RWPE1 (cell line): ENCODE measurements at regions of chr1 and their contacts with region 1.

Region 1: DNA sequence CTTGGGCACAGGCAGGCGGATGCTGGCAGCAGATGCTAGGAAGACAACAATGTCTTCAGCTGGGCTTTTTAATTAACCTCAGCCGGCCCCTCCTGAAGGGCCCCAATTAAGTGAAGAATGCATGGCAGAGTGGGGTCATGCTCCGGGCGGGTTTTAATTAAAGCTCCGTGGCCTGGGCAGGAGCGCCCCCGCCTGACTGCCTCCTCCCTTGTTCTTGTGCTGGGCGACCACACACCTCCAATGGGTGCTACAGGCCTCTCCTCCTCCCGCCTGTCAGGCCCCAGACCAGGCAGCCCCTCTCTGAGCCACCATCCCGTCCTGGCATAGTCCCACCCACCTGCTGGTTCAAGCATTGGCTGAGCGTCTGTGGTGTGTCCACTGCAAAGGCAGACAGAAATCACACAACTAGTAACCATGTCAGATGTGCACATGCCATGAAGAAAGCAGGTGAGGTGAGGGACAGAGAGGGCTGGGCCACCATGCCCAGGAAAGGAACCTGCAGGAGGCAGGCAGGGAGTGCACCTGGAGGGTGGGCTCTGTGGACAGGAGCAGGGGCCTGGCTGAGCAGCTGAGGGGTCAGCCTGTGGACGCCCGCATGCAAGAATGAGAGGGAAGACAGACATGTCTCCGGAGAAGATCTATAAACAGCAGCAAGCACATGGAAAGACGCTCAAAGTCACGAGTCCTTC is 8.5 kb upstream of the ARF1 start:
- DNase-seq: no peak
- H3K27ac ChIP-seq: no peak overlapping the region
- CTCF ChIP-seq: peak; percentile 49

Region 2: GRCh38 chr1:227913764-227914721 is 160.0 kb before region 1 on chr1:
- CTCF ChIA-PET with region 1: no interaction called
- POLR2A ChIA-PET with region 1: no interaction called
- DNase-seq: no peak
- H3K27ac ChIP-seq: 0 out of 2 replicates have a peak overlapping the region, but pooled peaks have one; percentile 13
- CTCF ChIP-seq: no peak

Region 3: GRCh38 chr1:227999056-227999930 is 74.7 kb before region 1 on chr1:
- CTCF ChIA-PET with region 1: interaction called, 15 read pairs
- POLR2A ChIA-PET with region 1: no interaction called
- DNase-seq: peak; percentile 89
- H3K27ac ChIP-seq: no peak overlapping the region
- CTCF ChIP-seq: peak; percentile 93

Region 4: GRCh38 chr1:228004331-228004855 is 69.6 kb before region 1 on chr1:
- CTCF ChIA-PET with region 1: interaction called, 15 read pairs
- POLR2A ChIA-PET with region 1: no interaction called
- DNase-seq: no peak
- H3K27ac ChIP-seq: no peak overlapping the region
- CTCF ChIP-seq: peak; percentile 65

Region 5: GRCh38 chr1:228212966-228213844 is 139.2 kb after region 1 on chr1:
- CTCF ChIA-PET with region 1: no interaction called
- POLR2A ChIA-PET with region 1: no interaction called
- DNase-seq: peak; percentile 86
- H3K27ac ChIP-seq: peak overlapping the region; percentile 88
- CTCF ChIP-seq: peak; percentile 84